Activated T-helper 1 cell treated with anti-CD3 and anti-CD28 coated beads, Interleukin-12 subunit alpha, Interleukin-12 subunit beta, Interleukin-2, Interleukin-4 antibody, amounts not matched to agents 30 ng/mL and 10 ng/mL and 1 ng/mL, durations not matched to agents 14 hours and 24 hours and 36 hours (primary cell): ENCODE measurements at regions of chr11 and their contacts with region 1.

Region 1: DNA sequence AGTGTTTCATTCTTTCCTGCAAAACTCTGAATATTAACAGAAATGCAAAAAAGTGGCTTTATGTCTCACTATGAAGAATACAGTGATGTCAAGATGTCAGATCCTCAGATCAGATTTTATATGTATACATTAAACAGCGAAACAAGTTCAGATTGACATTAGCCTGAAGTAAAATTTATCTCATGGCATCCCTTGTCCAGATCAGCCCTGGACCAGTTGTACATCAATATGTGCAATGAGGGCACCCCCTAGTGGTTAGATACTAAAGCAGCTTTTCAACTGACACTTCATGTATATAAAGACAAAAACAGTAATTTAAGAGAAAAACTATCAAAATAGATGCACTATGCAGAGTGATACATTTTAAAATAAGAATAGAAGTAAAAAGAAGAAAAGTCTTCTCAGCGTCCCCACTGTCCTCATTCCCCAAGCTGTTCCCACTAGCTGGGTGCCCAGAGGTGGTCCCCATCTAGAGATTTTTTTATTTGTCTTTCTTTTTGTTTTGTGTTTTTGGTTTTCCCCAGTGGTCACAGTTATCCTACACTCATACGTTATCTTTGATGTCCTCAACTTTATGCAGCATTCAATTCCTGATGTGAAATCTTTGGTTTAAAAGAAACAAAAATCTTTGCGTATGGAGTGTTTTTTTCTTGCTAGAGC is 2193.4 kb upstream of the RAG2 start:
- DNase-seq: no peak
- H3K4me3 Mint-ChIP-seq: no peak overlapping the region
- H3K27ac Mint-ChIP-seq: no peak overlapping the region
- H3K4me1 Mint-ChIP-seq: no peaks in the 10 kb centered on the region
- H3K27me3 Mint-ChIP-seq: no peaks in the 10 kb centered on the region

Region 2: GRCh38 chr11:37002831-37003230 is 1788.6 kb before region 1 on chr11:
- intact Hi-C with region 1: loop called (anchors 5 kb)
- DNase-seq: no peak
- H3K4me3 Mint-ChIP-seq: no peak overlapping the region
- H3K27ac Mint-ChIP-seq: no peak overlapping the region
- H3K4me1 Mint-ChIP-seq: no peaks in the 10 kb centered on the region
- H3K27me3 Mint-ChIP-seq: no peaks in the 10 kb centered on the region

Region 3: GRCh38 chr11:38612701-38613100 is 178.7 kb before region 1 on chr11:
- intact Hi-C with region 1: no loop called
- DNase-seq: no peak
- H3K4me3 Mint-ChIP-seq: no peak overlapping the region
- H3K27ac Mint-ChIP-seq: no peak overlapping the region
- H3K4me1 Mint-ChIP-seq: no peaks in the 10 kb centered on the region
- H3K27me3 Mint-ChIP-seq: no peaks in the 10 kb centered on the region